AG04449 (cell line): ENCODE measurements at regions of chr17 and their contacts with region 1.

Region 1: DNA sequence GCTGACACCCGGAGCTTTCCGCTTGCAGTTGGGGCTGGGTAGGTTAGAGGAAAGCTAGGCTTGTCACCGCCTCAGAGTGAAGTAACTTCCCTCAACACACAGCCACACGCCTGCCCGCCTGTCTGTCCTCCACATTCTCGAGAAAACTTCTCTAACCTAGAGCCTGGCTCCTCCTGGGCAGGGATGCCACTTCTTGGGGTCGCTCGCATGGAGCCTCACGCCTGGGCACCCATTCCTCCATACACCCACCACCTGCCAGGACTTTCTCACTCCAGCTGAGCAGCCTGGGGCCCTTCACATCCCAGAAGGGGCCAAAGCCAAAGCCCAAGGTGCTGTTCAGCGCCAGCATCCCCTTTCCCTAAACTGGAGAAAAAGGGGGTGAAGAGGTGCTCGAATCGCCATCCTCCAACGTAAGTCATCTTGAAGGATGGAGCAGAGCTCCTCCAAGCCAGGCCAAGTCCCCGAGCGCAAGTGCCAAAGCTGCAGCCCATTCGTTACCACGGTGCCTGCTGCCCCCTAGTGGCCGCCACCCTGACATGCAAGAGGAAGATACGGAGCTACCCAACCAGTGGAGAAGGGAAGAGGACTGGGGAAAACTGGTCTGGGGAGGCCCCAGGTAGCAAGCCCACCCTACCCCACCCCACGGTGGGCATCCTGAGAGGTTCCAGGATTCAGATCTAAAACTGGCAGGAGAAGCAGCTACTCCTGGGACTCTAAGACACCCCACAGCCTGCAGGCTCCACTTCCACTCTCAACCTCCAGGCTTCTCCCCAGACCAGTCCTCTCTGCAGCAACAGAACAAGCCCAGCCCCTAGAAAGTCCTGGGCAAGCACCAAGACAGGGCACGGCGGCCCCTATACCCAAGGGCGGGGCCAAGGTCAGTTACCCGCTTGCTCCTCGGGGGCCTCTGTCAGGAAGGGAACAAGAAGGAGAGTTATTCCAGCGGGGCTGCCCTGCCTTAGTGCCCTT is 63.1 kb downstream of the MYO18A start:
- DNase-seq: no peak
- H3K4me3 ChIP-seq: no peak overlapping the region
- CTCF ChIP-seq: peak; percentile 92

Region 2: GRCh38 chr17:28982131-28982951 is 134.7 kb before region 1 on chr17:
- CTCF ChIA-PET with region 1: interaction called, 19 read pairs
- POLR2A ChIA-PET with region 1: no interaction called
- DNase-seq: no peak
- H3K4me3 ChIP-seq: no peak overlapping the region
- CTCF ChIP-seq: no peak

Region 3: GRCh38 chr17:29048440-29049368 is 68.4 kb before region 1 on chr17:
- CTCF ChIA-PET with region 1: interaction called, 13 read pairs
- POLR2A ChIA-PET with region 1: no interaction called
- DNase-seq: no peak
- H3K4me3 ChIP-seq: no peak overlapping the region
- CTCF ChIP-seq: no peak

Region 4: GRCh38 chr17:29061036-29061435 is 56.1 kb before region 1 on chr17:
- CTCF ChIA-PET with region 1: interaction called, 19 read pairs
- POLR2A ChIA-PET with region 1: no interaction called
- DNase-seq: no peak
- H3K4me3 ChIP-seq: no peak overlapping the region
- CTCF ChIP-seq: no peak

Region 5: GRCh38 chr17:29140051-29140621 is 23.0 kb after region 1 on chr17:
- CTCF ChIA-PET with region 1: interaction called, 411 read pairs
- POLR2A ChIA-PET with region 1: interaction called, 3 read pairs
- DNase-seq: no peak
- H3K4me3 ChIP-seq: peak overlapping the region; percentile 49
- CTCF ChIP-seq: no peak

Region 6: DNA sequence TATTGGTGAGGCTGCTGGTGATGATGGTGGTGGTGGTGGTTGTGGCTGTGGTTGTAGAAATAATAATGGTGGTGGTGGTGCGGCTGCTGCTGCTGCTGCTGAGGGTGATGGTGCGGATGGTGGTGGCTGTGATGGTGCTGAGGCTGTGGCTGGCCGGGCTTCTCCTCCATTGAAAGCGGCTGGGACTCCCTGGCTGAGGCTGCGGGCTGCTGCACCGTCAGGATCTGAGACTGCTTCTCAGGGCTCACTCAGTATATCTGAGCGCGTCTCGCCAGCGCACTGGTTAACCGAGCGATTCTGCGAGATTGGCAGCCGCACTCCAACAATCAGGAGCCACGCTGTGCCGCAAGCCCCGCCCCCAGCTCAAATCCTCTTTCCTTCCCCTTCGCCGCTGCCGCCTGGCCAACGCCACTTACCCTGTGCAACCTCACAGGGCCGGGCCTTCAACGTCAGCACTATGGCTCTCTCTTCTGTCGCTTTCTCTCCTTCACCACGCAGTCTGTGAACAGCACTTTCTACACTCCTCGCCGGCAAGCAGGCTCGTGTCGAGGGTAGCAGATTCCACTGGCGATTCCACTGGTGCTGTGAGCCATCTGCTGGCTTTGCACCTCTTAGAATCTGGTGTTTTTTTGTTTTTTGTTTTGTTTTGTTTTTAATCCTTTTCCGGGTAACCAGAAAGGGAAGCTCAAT is 176.9 kb after region 1 on chr17 and contains the start of gene NUFIP2:
- CTCF ChIA-PET with region 1: interaction called, 12 read pairs
- POLR2A ChIA-PET with region 1: interaction called, 3 read pairs
- DNase-seq: peak; percentile 83
- H3K4me3 ChIP-seq: peak within 1 kb of the TSS; percentile 99
- CTCF ChIP-seq: no peak

Region 7: DNA sequence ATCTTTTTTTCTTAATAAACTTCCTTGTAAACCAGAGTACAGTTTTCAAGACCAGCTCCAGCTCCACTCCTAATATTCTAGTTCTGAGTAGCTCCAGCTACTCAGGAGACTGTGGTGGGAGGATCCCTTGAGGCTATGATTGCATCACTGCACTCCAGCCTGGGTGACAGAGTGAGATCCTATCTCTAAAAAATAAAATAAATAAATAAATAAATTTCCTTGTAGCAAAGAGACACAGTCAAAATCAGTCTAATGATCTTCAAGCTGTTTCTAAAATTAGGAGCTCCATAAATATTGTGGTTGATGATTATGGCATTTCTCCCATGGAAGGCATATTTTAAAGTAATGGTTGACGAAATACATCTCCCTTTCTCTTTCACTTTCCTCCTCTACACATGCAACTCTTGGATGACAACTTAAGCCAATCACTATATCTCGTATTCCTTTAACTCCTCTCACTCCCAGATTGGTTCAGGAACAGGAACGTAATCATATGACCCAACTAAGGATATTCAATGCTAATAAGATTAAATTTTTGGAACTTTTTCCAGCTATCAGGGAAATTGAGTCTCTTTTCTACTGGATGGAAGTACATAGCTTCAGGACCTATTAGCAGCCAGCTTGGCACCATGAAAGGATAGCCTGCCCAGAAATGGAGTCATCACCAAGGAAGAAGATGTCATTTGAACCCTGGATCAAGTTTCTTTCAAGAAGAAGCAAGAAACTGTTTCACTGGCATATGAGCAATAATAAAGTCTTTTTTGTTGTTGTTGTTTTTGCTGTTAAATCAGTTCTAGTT is 230.9 kb after region 1 on chr17:
- CTCF ChIA-PET with region 1: no interaction called
- POLR2A ChIA-PET with region 1: no interaction called
- DNase-seq: no peak
- H3K4me3 ChIP-seq: no peak overlapping the region
- CTCF ChIP-seq: no peak